Lower leg skin (tissue), 4 donors: ENCODE measurements at regions of chr6 and their contacts with region 1.

Region 1: GRCh38 chr6:24428628-24429027 is 25.9 kb downstream of the MRS2 start:
- DNase-seq: no peak
- H3K4me3 ChIP-seq: no peak overlapping the region
- CTCF ChIP-seq: no peak
- POLR2A ChIP-seq: no peak

Region 2: DNA sequence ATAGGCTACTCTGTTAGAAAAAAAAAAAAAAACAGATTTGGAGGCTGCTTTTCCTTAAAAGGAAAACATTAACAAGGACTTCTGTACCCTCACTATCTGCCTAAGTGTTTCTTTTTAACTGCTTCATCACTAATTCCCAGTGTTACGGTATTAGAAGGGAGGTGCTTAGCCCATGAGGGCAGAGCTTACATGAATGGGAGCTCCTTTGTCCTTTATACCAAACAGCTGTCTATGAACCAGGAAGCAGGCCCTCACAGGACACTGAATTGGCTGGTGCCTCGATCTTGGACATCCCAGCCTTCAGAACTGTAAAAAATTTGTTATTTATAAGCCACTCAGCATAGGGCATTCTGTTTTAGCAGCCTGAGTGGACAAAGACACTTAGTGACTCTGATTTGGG is 518.2 kb before region 1 on chr6:
- intact Hi-C with region 1: no loop called
- DNase-seq: no peak
- H3K4me3 ChIP-seq: no peak overlapping the region
- CTCF ChIP-seq: no peak
- POLR2A ChIP-seq: no peak

Region 3: DNA sequence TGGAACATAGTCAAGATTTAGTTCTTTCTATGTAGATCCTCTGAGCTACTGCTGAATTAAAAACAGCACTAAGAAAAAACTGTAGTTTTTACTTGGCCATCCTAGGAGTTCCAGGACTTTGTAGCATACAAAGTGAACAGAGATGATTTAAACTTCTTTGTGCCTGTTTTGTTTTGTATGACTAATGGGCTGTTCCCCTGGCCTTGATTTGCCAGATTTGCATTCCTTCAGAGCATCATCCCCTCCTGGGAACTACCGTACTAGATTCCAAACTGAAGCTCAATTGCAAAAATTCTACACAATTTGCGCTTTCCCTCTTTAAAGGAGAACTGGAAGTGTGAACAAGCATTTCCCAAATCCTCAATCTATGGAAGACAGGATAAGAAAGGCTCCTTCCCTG is 261.3 kb after region 1 on chr6:
- intact Hi-C with region 1: loop called (anchors 5 kb)
- DNase-seq: no peak
- H3K4me3 ChIP-seq: no peak overlapping the region
- CTCF ChIP-seq: no peak
- POLR2A ChIP-seq: no peak